ENCODE measurements at regions of chr16 and their contacts with region 1.

Region 1: GRCh38 chr16:9090960-9091866 is at the start of gene HAPSTR1:
- DNase-seq: peak; percentile 99
- H3K4me3 Mint-ChIP-seq: peak within 1 kb of the TSS; percentile 99
- H3K27ac Mint-ChIP-seq: peak within 1 kb of the TSS; percentile 97
- H3K4me1 Mint-ChIP-seq: peaks cover 29% of the 10 kb centered on the region
- H3K27me3 Mint-ChIP-seq: no peaks in the 10 kb centered on the region
- total RNA-seq, gene HAPSTR1: 65.1 to 65.3 TPM

Region 2: DNA sequence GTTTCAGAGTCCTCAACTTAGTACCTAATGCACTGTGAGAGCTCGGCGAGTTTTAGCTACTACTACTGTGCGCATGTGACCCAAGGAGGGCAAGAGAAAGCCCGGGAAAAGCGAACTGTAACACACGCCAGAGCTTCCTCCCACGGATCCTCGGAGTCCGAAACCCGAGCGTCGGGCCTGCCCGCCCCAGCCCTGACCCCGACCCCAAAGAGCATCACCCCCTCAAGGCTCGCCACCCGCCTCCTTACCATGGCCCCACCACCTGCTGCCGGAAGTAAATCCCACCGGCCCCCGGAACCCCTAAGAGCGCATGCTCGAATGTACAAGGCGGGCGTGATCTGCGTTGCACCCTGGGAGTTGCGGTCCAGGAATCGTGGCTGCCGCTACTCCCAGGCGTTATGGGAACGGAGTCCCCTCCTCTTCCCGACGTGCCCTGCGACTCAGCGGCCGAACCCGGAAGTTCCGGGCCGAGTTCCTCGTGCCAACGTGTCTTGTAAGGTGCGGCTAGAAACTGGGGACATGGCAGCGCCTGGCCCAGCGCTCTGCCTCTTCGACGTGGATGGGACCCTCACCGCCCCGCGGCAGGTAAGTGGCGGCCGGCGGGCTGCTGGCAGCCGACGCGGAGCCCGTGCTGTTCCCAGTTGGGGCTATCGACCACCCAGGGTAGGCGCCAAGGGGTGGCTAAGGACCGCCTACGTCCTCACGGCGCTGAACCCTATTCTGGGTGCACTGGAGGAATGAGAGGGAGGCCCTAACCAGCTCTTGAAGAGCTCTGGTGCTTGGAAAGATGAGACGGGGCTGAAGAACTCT is 293.6 kb before region 1 on chr16 and contains the starts of genes PMM2 and TMEM186:
- CTCF ChIA-PET with region 1: no interaction called
- POLR2A ChIA-PET with region 1: interaction called, 15 read pairs
- DNase-seq: peak; percentile 97
- H3K4me3 Mint-ChIP-seq: peak within 1 kb of the TSS; percentile 93
- H3K27ac Mint-ChIP-seq: peak within 1 kb of the TSS; percentile 71
- H3K4me1 Mint-ChIP-seq: peaks cover 38% of the 10 kb centered on the region
- H3K27me3 Mint-ChIP-seq: no peaks in the 10 kb centered on the region
- total RNA-seq, gene PMM2: 41.7 to 41.8 TPM
- total RNA-seq, gene TMEM186: 12.2 to 12.6 TPM

Region 3: GRCh38 chr16:8963825-8964441 is 127.3 kb before region 1 on chr16 and contains the start of gene USP7:
- CTCF ChIA-PET with region 1: interaction called, 3 read pairs
- POLR2A ChIA-PET with region 1: interaction called, 43 read pairs
- DNase-seq: peak; percentile 94
- H3K4me3 Mint-ChIP-seq: peak within 1 kb of the TSS; percentile 94
- H3K27ac Mint-ChIP-seq: peak within 1 kb of the TSS; percentile 92
- H3K4me1 Mint-ChIP-seq: peaks cover 41% of the 10 kb centered on the region
- H3K27me3 Mint-ChIP-seq: peaks cover 6% of the 10 kb centered on the region
- total RNA-seq, gene USP7: 162 to 166 TPM

Region 4: DNA sequence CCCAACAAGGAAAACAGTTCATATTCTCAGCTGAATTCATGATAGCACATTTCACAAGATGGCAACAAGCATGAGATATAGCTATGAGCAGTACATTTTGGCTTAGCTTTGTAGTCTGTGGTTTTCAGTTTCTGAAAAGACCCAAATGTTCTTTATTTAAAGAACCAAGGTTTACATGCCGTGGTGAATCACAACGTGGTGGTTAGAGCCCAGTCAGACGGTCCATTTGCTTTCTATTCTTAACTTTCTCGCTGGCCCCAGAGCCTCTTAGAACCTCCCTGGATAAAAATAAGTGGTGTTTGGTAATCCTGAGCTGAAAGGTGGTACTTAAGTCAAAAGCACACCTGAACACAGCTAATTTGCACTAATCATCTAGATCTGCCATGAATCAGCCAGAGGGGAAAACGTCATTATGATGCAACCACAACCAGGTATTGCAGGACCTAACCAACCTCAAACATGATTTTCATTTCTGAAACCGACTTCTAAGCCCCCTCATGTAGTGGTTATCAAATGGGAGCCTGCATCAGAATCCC is 18.3 kb before region 1 on chr16:
- CTCF ChIA-PET with region 1: interaction called, 11 read pairs
- POLR2A ChIA-PET with region 1: interaction called, 234 read pairs
- DNase-seq: peak; percentile 28
- H3K4me3 Mint-ChIP-seq: peak overlapping the region; percentile 15
- H3K27ac Mint-ChIP-seq: peak overlapping the region; percentile 91
- H3K4me1 Mint-ChIP-seq: peaks cover 44% of the 10 kb centered on the region
- H3K27me3 Mint-ChIP-seq: no peaks in the 10 kb centered on the region

Region 5: DNA sequence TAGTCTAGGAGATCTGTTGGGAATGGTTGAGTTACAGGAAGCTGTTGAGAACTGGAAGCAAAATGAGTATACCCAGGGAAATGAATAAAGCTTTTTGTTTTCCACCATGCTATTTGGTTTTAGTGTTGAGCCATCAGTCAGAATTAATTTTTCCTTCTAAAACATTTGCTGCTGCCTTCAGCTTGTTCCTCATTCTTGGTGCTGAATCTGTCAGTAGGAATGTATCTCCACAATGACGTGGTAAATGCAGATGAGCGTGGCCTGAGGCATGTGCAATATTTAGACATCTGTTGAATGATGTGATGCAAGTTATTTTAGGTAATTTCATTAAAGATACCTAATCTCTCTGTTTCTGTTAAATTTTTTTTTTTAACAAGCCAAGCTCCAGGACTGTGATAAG is 11.2 kb after region 1 on chr16:
- CTCF ChIA-PET with region 1: interaction called, 15 read pairs
- POLR2A ChIA-PET with region 1: interaction called, 94 read pairs
- DNase-seq: no peak
- H3K4me3 Mint-ChIP-seq: no peak overlapping the region
- H3K27ac Mint-ChIP-seq: peak overlapping the region; percentile 75
- H3K4me1 Mint-ChIP-seq: peaks cover 90% of the 10 kb centered on the region
- H3K27me3 Mint-ChIP-seq: no peaks in the 10 kb centered on the region